ENCODE measurements at regions of chr3 and their contacts with region 1.

Region 1: DNA sequence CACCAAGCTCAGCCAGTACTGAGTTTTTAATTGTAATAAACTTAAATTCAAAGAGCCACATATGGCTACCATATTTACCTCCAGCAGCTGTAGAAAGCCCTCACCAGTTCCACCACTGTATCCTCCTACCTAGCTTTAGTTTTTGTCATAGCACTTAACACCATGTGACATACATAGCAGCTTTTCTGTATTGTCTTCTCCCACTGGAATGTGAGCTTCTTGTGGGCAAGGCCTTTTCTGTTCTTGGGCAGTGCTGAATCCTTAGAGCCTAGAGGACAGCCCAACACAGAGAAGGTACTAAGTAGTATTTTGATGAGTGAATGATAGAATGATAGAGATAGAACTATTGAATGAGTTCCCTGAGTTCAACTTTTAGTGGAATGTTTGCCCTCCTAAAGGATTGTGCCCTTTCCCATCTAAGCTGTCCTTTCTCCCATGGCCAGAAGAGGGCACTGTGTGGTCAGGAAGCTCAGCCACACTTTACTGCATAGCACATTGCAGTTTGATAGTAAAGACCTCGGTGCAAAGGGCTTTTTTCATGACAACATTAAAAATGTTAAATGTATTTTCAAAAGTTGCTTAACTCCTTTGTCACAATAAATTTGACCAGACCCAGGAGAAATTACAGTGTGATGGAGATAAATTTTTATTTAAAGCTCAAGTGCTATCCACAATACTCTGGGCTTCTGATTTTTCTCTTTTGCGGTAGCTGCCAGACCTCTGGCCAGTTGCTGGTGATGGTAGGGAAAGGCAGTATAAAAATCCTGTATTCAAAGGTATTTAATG is 115.8 kb downstream of the GHSR start:
- DNase-seq: no peak
- ATAC-seq: peak; percentile 97
- H3K4me3 ChIP-seq: no peak overlapping the region
- H3K27ac ChIP-seq: no peak overlapping the region
- H3K4me1 ChIP-seq: no peaks in the 10 kb centered on the region
- H3K27me3 ChIP-seq: no peaks in the 10 kb centered on the region
- CTCF ChIP-seq: peak; percentile 81 to 90 (median 88)
- EP300 ChIP-seq: no peak
- POLR2A ChIP-seq: no peak
- RAD21 ChIP-seq: peak; percentile 63

Region 2: GRCh38 chr3:171646357-171647133 is 685.9 kb before region 1 on chr3:
- CTCF ChIA-PET with region 1: interaction called, 6 read pairs
- POLR2A ChIA-PET with region 1: no interaction called
- RAD21 ChIA-PET with region 1: no interaction called
- SMC1A ChIA-PET with region 1: no interaction called
- in situ Hi-C with region 1: no loop called
- intact Hi-C with region 1: loop called (anchors 10 kb)
- DNase-seq: no peak
- ATAC-seq: peak; percentile 70
- H3K4me3 ChIP-seq: no peak overlapping the region
- H3K27ac ChIP-seq: no peak overlapping the region
- H3K4me1 ChIP-seq: no peaks in the 10 kb centered on the region
- H3K27me3 ChIP-seq: no peaks in the 10 kb centered on the region
- CTCF ChIP-seq: peak; percentile 44 to 67 (median 55)
- EP300 ChIP-seq: no peak
- POLR2A ChIP-seq: no peak
- RAD21 ChIP-seq: peak; percentile 80

Region 3: GRCh38 chr3:172046268-172046915 is 286.1 kb before region 1 on chr3:
- CTCF ChIA-PET with region 1: interaction called, 10 read pairs
- POLR2A ChIA-PET with region 1: no interaction called
- RAD21 ChIA-PET with region 1: interaction called, 8 read pairs
- SMC1A ChIA-PET with region 1: interaction called, 7 read pairs
- in situ Hi-C with region 1: no loop called
- intact Hi-C with region 1: no loop called
- DNase-seq: no peak
- ATAC-seq: peak; percentile 64
- H3K4me3 ChIP-seq: no peak overlapping the region; the same call in 1 of the 2 replicates
- H3K27ac ChIP-seq: peak overlapping the region; percentile 18; the same call in 1 of the 2 replicates
- H3K4me1 ChIP-seq: no peaks in the 10 kb centered on the region
- H3K27me3 ChIP-seq: no peaks in the 10 kb centered on the region
- CTCF ChIP-seq: no peak
- EP300 ChIP-seq: no peak
- POLR2A ChIP-seq: no peak
- RAD21 ChIP-seq: no peak

Region 4: GRCh38 chr3:172145031-172145686 is 187.3 kb before region 1 on chr3:
- CTCF ChIA-PET with region 1: interaction called, 4 read pairs
- POLR2A ChIA-PET with region 1: no interaction called
- RAD21 ChIA-PET with region 1: interaction called, 8 read pairs
- SMC1A ChIA-PET with region 1: interaction called, 10 read pairs
- in situ Hi-C with region 1: no loop called
- intact Hi-C with region 1: no loop called
- DNase-seq: peak; percentile 60
- ATAC-seq: peak; percentile 57
- H3K4me3 ChIP-seq: no peak overlapping the region
- H3K27ac ChIP-seq: peak overlapping the region; percentile 48
- H3K4me1 ChIP-seq: peaks cover 66% of the 10 kb centered on the region
- H3K27me3 ChIP-seq: no peaks in the 10 kb centered on the region
- CTCF ChIP-seq: no peak
- EP300 ChIP-seq: peak in 1 of 2 experiments; percentile 8; a peak in 1 of 4 replicates
- POLR2A ChIP-seq: no peak
- RAD21 ChIP-seq: no peak; the same call in 1 of the 2 replicates

Region 5: GRCh38 chr3:172300862-172301261 is 31.6 kb before region 1 on chr3:
- CTCF ChIA-PET with region 1: interaction called, 12 read pairs
- POLR2A ChIA-PET with region 1: no interaction called
- RAD21 ChIA-PET with region 1: no interaction called
- SMC1A ChIA-PET with region 1: no interaction called
- in situ Hi-C with region 1: no loop called
- intact Hi-C with region 1: no loop called
- DNase-seq: no peak
- ATAC-seq: no peak
- H3K4me3 ChIP-seq: no peak overlapping the region
- H3K27ac ChIP-seq: no peak overlapping the region
- H3K4me1 ChIP-seq: no peaks in the 10 kb centered on the region
- H3K27me3 ChIP-seq: no peaks in the 10 kb centered on the region
- CTCF ChIP-seq: no peak
- EP300 ChIP-seq: no peak
- POLR2A ChIP-seq: no peak
- RAD21 ChIP-seq: no peak

Region 6: DNA sequence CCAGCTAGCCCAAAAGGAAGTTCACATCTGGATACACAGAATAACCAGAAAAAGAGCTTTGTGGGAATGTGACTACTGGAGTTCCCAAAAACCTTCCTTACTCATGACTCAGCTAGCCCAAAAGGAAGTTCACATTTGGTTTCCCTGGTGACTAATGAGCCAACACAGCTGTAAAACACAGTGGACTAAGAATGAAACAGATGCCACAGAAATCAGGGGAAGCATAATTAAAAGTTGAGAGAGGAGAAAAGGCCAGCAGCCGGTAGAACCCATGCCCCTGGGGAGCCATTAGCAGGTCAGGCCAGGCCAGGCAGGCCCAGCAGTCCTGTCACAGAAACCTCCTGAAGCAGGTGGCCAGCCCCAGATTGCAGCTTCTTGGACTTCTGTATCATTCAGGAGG is 14.5 kb before region 1 on chr3:
- CTCF ChIA-PET with region 1: interaction called, 48 read pairs
- POLR2A ChIA-PET with region 1: no interaction called
- RAD21 ChIA-PET with region 1: interaction called, 8 read pairs
- SMC1A ChIA-PET with region 1: interaction called, 9 read pairs
- in situ Hi-C with region 1: no loop called
- intact Hi-C with region 1: no loop called
- DNase-seq: peak; percentile 74
- ATAC-seq: peak; percentile 84
- H3K4me3 ChIP-seq: no peak overlapping the region
- H3K27ac ChIP-seq: peak overlapping the region; percentile 48
- H3K4me1 ChIP-seq: peaks cover 10% of the 10 kb centered on the region
- H3K27me3 ChIP-seq: no peaks in the 10 kb centered on the region
- CTCF ChIP-seq: no peak
- EP300 ChIP-seq: peak; percentile 51 to 71
- POLR2A ChIP-seq: no peak
- RAD21 ChIP-seq: no peak

Region 7: GRCh38 chr3:172354931-172355499 is 22.6 kb after region 1 on chr3:
- CTCF ChIA-PET with region 1: interaction called, 14 read pairs
- POLR2A ChIA-PET with region 1: no interaction called
- RAD21 ChIA-PET with region 1: interaction called, 3 read pairs
- SMC1A ChIA-PET with region 1: interaction called, 5 read pairs
- in situ Hi-C with region 1: no loop called
- intact Hi-C with region 1: no loop called
- DNase-seq: no peak
- ATAC-seq: no peak
- H3K4me3 ChIP-seq: no peak overlapping the region
- H3K27ac ChIP-seq: no peak overlapping the region
- H3K4me1 ChIP-seq: no peaks in the 10 kb centered on the region
- H3K27me3 ChIP-seq: no peaks in the 10 kb centered on the region
- CTCF ChIP-seq: no peak
- EP300 ChIP-seq: no peak
- POLR2A ChIP-seq: no peak
- RAD21 ChIP-seq: no peak

Measured in GM12878 (cell line).